H1 (cell line): ENCODE measurements at regions of chr4 and their contacts with region 1.

Region 1: DNA sequence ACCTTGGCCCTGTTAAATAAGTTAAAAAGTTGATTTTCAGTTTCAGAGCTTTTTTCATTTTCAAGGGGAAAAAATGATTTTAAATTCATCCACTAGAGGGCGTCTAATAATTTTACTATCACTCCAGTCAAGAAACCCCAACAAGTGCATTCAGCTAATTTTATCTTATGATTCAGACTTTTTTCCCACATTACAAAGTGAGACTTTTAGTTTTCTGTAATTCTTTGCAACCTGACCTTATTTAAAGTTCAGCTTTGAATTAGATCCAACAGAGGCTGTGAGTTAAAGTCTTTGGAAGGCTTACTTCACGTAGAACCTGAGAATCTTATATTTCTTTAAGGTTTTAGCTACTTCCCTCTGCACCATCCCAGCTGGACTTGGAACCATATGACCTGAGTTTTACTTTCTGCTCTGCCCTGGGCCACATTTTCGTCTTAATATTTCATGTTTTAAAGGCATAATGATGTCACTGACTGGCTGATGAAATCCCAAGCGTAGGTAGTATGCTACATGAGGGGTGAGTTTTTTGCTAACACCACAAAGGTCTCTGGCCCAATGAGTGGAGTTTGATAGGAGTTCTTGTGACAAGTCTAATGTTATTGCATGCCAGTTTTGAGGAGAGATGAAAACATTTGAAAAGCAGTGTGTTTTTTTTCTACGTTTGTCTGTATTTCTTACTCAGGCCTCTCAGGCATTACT is 7.2 kb downstream of the GNRHR start:
- DNase-seq: no peak
- H3K4me3 ChIP-seq: no peak overlapping the region
- H3K27ac ChIP-seq: no peak overlapping the region
- H3K4me1 ChIP-seq: no peaks in the 10 kb centered on the region
- H3K27me3 ChIP-seq: no peaks in the 10 kb centered on the region
- CTCF ChIP-seq: peak in 2 of 3 experiments; percentile 15 to 16; a peak in 2 of 4 replicates
- EP300 ChIP-seq: no peak
- POLR2A ChIP-seq: no peak
- RAD21 ChIP-seq: no peak

Region 2: DNA sequence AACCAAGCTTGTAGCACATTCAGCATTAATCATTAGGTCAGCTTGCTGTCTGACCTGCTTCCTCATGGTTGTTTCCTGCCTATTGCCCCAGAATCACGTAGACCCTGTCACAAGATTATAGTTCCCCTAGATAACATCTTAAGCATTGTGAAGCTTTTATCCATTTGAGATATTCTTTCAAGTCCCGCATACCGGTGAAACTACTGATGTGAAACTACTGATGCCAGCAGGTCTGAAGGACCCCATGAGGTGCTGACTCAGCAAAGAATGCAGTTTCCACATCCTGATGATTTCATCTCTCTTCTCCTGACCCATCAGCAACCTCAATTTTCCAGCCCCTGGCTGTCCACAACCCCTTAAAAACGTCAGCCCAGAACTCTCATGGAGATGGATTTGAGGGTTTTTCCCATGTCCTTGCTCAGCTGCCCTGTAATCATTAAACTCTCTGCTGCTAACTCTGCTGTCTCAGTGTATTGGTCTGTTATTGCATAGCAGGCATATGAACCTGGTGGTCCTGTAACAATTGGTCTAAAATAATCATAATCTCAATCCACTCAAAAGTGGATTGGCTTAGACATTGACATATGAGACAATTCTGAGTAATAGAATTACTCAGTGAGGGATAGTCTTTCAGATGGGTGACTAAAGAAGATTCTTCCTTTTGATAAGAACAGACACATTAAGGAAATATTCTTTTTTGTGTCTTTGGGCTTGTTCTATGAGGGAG is 19.7 kb before region 1 on chr4:
- CTCF ChIA-PET with region 1: interaction called, 49 read pairs
- POLR2A ChIA-PET with region 1: no interaction called
- DNase-seq: no peak
- H3K4me3 ChIP-seq: no peak overlapping the region
- H3K27ac ChIP-seq: 0 out of 2 replicates have a peak overlapping the region, but pooled peaks have one; percentile 14
- H3K4me1 ChIP-seq: peaks cover 0 to 3% (median 0%) of the 10 kb centered on the region in 4 experiments; a peak in 1 of 7 replicates
- H3K27me3 ChIP-seq: no peaks in the 10 kb centered on the region
- CTCF ChIP-seq: no peak
- EP300 ChIP-seq: no peak
- POLR2A ChIP-seq: no peak
- RAD21 ChIP-seq: no peak

Region 3: DNA sequence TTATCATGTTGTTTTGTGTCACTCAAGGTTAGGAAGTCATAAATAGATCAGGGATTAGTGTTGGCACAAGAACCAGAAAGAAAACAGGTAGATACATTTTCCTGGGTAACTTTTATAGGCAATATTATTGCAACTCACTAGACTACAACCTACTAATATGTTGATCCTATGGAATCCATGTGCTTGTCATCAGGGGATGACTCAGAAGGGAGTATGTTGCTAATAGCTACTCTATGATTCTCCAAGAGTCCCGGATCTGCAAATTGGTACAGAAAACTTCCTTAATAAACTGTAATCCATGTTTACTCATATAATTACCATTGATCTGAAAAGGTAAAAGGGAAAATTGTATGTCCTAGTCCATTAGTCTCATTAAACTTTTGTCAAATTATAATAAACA is 19.0 kb after region 1 on chr4:
- CTCF ChIA-PET with region 1: interaction called, 14 read pairs
- POLR2A ChIA-PET with region 1: interaction called, 3 read pairs
- DNase-seq: no peak
- H3K4me3 ChIP-seq: no peak overlapping the region
- H3K27ac ChIP-seq: no peak overlapping the region
- H3K4me1 ChIP-seq: 0 out of 7 replicates have a peak, but pooled peaks cover 0 to 2% (median 0%) of the 10 kb centered on the region in 4 experiments
- H3K27me3 ChIP-seq: no peaks in the 10 kb centered on the region
- CTCF ChIP-seq: no peak
- EP300 ChIP-seq: no peak
- POLR2A ChIP-seq: no peak
- RAD21 ChIP-seq: no peak

Region 4: DNA sequence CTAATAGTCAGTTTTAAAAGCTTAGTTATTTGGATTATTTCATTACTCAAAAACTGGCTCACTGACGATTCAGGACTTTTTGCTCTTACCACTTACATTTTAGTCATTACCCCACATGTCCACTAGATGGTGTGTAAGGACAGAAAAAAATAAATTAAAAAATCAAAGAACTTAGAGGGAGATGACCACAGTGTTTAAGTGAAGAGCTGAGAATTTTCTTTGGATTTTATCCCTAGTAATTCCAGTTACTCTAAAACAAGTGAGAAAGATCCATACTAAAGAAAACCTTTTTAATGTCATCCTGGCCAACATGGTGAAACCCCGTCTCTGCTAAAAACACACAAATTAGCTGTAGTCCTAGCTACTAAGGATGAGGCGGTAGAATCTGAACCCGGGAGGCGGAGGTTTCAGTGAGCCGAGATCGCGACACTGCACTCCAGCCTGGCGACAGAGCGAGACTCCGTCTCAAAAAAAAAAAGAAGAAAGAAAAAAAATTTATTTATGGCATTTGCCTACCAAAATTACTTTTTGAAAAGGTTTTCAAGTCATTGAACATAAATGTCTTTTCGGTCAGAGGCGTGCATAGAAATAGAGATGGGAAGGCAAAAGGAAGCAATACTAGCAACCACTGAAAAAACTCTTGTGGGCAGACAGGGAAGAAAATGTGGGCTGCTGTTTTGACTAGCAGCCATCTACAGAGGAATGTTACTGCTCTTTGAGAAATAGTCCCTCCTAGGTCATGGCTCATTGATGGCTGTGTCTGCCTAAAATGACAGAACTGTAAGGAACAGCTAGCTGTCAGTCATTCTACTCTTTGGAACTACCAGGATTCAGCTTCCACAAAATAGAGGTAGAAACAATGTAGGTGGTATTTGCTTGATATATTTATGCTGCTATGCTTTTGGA is 525.2 kb after region 1 on chr4:
- CTCF ChIA-PET with region 1: no interaction called
- POLR2A ChIA-PET with region 1: no interaction called
- DNase-seq: no peak
- H3K4me3 ChIP-seq: peak overlapping the region in 2 of 4 experiments; percentile 8 to 48; a peak in 4 of 8 replicates
- H3K27ac ChIP-seq: peak overlapping the region; percentile 7; the same call in 1 of the 2 replicates
- H3K4me1 ChIP-seq: peaks cover 2 to 15% (median 8%) of the 10 kb centered on the region in 4 experiments; a peak in 4 of 7 replicates
- H3K27me3 ChIP-seq: no peaks in the 10 kb centered on the region
- CTCF ChIP-seq: peak in 2 of 3 experiments; percentile 38 to 46; a peak in 2 of 4 replicates
- EP300 ChIP-seq: no peak
- POLR2A ChIP-seq: no peak
- RAD21 ChIP-seq: peak; percentile 66 to 71